ENCODE measurements at regions of chr5 and their contacts with region 1.

Region 1: GRCh38 chr5:137332296-137332695 is 166.8 kb downstream of the SPOCK1 start:
- H3K4me3 ChIP-seq: no peak overlapping the region
- H3K27ac ChIP-seq: no peak overlapping the region
- H3K4me1 ChIP-seq: no peaks in the 10 kb centered on the region
- CTCF ChIP-seq: no peak

Region 2: DNA sequence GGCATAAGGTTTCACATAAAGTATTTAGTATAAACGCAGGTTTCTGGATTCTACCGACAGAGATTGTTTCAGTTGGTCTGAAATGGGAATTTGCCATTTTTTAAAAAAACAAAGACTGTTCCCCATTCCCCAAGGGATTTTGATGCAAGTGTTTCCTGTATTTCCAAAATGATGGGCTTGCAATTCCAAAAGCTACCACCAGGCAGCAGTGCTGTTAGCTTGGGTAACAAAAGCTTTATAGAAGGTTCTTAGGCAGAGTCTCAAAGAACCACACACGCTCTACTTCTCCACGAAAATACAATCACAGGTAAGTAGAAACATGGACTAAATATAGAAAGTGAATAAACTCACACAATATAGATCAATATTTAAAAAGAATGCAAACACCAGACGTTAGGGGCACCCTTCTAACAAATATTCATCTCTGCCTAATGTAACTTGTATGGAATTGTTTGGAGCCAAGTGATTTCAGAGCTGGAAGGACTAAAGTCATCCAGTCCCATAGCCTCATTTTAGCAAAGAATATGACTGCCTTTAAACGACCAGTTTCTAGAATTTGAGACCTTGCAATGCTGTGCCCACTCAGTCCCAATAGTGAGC is 12.5 kb after region 1 on chr5:
- CTCF ChIA-PET with region 1: interaction called, 10 read pairs
- POLR2A ChIA-PET with region 1: no interaction called
- H3K4me3 ChIP-seq: no peak overlapping the region
- H3K27ac ChIP-seq: no peak overlapping the region
- H3K4me1 ChIP-seq: no peaks in the 10 kb centered on the region
- CTCF ChIP-seq: no peak

Region 3: DNA sequence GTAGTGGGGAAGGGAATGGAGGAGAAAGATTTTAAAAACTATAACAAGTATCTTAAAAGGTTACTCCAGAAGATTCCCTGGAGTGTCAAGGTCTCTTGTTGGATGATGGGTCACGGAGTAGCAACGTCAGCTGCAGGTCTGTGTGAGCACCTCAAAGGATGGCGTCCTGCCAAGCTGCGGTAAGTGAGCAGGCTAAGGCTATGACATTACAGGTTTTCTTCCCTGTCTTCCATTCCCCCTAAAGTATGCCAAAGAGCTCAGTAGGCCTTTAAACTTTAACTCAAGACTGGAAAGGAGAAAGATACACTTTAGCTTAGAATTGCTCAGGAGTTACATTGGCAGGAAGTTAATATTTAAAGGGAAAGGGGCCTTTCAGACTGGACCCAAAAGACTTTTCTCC is 149.3 kb after region 1 on chr5:
- CTCF ChIA-PET with region 1: no interaction called
- POLR2A ChIA-PET with region 1: no interaction called
- H3K4me3 ChIP-seq: no peak overlapping the region
- H3K27ac ChIP-seq: no peak overlapping the region
- H3K4me1 ChIP-seq: no peaks in the 10 kb centered on the region
- CTCF ChIP-seq: no peak